K562 (cell line): ENCODE measurements at regions of chr17 and their contacts with region 1.

Region 1: DNA sequence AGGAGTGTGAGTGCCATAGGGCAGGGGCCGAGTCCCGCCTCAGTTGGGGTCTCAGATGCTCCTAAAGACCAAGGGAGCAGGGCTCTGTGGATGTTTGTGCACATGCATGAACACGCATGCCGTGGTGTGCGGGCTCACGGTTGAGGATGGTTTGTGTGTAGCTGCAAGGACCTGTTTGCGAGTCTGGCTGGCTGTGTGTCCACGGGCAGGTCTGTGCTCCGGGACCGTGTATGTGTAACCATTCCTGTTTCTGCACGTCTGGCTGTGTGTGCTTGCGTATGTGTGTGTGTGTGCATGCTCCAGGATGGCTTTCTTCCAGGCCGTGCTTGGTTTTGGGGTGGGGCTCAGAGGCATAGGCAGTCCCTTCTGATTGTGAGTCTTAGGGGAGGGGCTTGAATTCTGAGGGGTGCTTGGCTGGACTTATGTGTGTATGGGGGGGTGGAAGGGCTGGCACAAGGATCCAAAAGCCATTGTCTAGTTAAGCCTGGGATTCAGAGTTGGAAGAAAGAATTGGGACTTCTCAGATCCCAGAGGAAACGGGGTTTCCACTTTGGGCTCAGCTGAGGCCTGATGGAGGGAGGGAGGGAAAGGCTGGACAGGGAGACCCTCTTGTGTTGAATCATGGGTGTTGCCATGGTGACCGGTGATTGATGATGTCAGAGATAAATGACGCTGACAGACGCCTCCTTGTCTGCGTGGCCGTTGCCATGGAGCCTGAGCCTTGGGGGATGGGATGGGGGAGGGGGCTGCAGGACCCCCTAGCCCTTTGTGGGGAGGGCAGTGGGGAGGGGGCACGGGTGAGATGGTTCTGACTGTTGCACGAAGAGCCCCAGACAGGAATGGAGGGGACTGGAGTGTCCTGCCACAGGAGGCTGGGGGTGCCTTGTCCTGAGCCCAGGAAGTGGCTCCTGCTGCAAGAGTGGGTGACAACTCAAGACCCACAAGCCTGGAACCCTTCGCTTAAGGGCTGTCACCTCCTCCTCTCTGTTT is 14.3 kb downstream of the GJD3 start:
- DNase-seq: peak in 1 of 4 experiments; percentile 47
- ATAC-seq: no peak
- H3K4me3 ChIP-seq: no peak overlapping the region
- H3K27ac ChIP-seq: no peak overlapping the region
- H3K4me1 ChIP-seq: peaks cover 28 to 67% of the 10 kb centered on the region in 2 experiments
- H3K27me3 ChIP-seq: no peaks in the 10 kb centered on the region
- CTCF ChIP-seq: no peak
- EP300 ChIP-seq: no peak
- POLR2A ChIP-seq: no peak
- RAD21 ChIP-seq: no peak

Region 2: GRCh38 chr17:40151414-40151963 is 198.7 kb before region 1 on chr17:
- CTCF ChIA-PET with region 1: no interaction called
- POLR2A ChIA-PET with region 1: no interaction called
- in situ Hi-C with region 1: no loop called
- intact Hi-C with region 1: no loop called
- DNase-seq: no peak
- ATAC-seq: no peak
- H3K4me3 ChIP-seq: no peak overlapping the region
- H3K27ac ChIP-seq: no peak overlapping the region
- H3K4me1 ChIP-seq: peaks cover 8% of the 10 kb centered on the region in 2 experiments
- H3K27me3 ChIP-seq: no peaks in the 10 kb centered on the region
- CTCF ChIP-seq: no peak
- EP300 ChIP-seq: no peak
- POLR2A ChIP-seq: no peak
- RAD21 ChIP-seq: no peak

Region 3: DNA sequence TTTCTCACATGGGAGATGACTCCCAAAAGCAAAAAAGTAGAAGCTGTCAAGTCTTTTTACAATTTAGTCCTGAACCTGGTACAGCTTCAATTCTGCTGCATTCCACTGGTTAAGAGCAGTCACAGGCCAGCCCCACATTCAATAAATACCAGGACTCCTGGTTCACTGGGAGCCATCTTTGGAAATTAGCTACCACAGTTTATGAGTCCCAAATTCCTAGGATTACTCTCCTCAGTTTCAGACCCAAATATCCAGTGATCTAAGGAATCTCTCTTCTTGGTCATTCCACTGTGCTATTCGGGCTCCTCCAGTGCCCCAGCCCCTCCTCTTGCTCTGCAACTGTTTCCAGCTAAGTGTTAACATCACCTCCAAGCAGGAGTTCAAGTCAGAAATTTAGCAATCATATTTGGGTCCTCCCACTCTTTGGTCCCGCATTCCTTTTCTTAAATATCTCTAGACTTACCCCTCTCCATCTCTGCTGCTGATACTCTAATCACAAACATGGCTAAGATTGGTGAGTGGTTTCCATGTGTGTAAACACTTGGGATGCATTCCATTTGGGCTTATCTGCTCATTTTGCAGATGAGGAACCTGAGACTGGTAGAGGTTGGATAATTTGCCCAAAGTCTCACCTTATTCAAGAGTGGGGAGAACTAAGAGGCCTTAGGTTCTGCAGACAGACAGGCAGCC is 140.7 kb before region 1 on chr17:
- CTCF ChIA-PET with region 1: no interaction called
- POLR2A ChIA-PET with region 1: no interaction called
- in situ Hi-C with region 1: loop called (anchors 5 kb)
- intact Hi-C with region 1: no loop called
- DNase-seq: no peak
- ATAC-seq: no peak
- H3K4me3 ChIP-seq: no peak overlapping the region
- H3K27ac ChIP-seq: no peak overlapping the region
- H3K4me1 ChIP-seq: peaks cover 0 to 5% of the 10 kb centered on the region in 2 experiments; a peak in 1 of 5 replicates
- H3K27me3 ChIP-seq: no peaks in the 10 kb centered on the region
- CTCF ChIP-seq: no peak
- EP300 ChIP-seq: no peak
- POLR2A ChIP-seq: no peak
- RAD21 ChIP-seq: no peak